ENCODE measurements at regions of chr5 and their contacts with region 1.

Region 1: DNA sequence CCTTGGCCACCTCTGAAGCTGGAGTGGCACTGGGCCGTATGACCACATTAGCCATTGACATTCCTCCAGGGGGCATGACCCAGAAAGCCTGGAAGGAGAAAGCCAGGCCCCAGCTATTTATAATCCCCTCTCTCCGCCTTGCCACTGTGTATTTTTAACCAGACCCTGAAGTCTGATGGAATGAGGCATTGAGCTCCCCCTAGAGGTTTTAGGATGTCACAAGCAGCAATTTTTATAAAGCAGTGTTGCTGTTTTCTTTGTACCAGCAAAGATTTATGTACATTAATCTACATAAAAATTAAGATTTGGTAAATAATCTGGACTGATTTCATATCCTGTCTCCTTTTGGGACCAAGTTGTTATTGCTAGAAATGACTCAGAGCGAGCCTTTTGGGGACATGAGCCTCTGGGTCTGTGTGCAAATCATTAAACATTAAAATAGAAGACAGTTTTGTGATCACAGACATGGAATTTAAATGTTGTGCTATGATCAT is 127.1 kb downstream of the TRIO start:
- DNase-seq: peak in 12 of 42 donors; percentile 30 to 72 (median 41)

Region 2: DNA sequence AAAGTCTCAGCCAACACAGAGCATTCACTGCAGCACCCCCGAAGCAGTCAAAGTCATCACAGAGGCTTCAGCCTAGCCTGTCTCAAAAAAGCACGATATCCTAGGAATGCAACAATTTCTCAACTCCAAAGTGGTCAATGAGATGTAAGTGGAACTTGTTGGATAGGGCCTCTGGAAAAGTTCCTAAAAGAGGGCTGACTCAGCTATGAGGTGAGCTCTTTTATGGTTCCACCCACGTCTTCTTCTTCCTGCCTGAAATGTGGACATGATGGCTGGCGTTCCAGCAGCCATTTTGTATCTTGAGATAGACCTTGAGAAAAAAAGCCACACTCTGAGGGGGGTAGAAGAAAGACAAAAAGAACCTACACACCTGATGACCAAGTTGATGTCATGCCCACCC is 159.6 kb before region 1 on chr5:
- intact Hi-C with region 1: loop called (anchors 5 kb)
- DNase-seq: no peak

Region 3: GRCh38 chr5:14185326-14186058 is 84.8 kb before region 1 on chr5:
- intact Hi-C with region 1: no loop called
- DNase-seq: peak in 30 of 42 donors; percentile 11 to 70 (median 42)

Measured in head of caudate nucleus (tissue), 42 donors.